Dorsolateral prefrontal cortex (tissue), 120 donors: ENCODE measurements at regions of chr15 and their contacts with region 1.

Region 1: GRCh38 chr15:85504749-85505676 is 124.6 kb downstream of the AKAP13 start:
- DNase-seq: peak in 3 of 10 donors; percentile 8 to 60 (median 10)
- H3K4me3 ChIP-seq: no peak overlapping the region
- H3K27ac ChIP-seq: no peak overlapping the region
- H3K27me3 ChIP-seq: peaks cover 0 to 3% (median 0%) of the 10 kb centered on the region in 45 donors
- CTCF ChIP-seq: peak; percentile 35 to 85 (median 64)

Region 2: GRCh38 chr15:85010386-85011159 is 494.4 kb before region 1 on chr15:
- intact Hi-C with region 1: no loop called
- DNase-seq: no peak
- H3K4me3 ChIP-seq: no peak overlapping the region
- H3K27ac ChIP-seq: peak overlapping the region in 55 of 59 donors; percentile 1 to 85 (median 62)
- H3K27me3 ChIP-seq: no peaks in the 10 kb centered on the region
- CTCF ChIP-seq: peak in 22 of 56 donors; percentile 34 to 67 (median 48)

Region 3: GRCh38 chr15:85289677-85290365 is 215.2 kb before region 1 on chr15:
- intact Hi-C with region 1: loop called in 1 of 2 experiments (anchors 5 kb)
- DNase-seq: peak in 5 of 10 donors; percentile 16 to 71 (median 49)
- H3K4me3 ChIP-seq: no peak overlapping the region
- H3K27ac ChIP-seq: no peak overlapping the region
- H3K27me3 ChIP-seq: peaks cover 0 to 6% (median 0%) of the 10 kb centered on the region in 45 donors
- CTCF ChIP-seq: peak in 55 of 56 donors; percentile 26 to 80 (median 59)

Region 4: DNA sequence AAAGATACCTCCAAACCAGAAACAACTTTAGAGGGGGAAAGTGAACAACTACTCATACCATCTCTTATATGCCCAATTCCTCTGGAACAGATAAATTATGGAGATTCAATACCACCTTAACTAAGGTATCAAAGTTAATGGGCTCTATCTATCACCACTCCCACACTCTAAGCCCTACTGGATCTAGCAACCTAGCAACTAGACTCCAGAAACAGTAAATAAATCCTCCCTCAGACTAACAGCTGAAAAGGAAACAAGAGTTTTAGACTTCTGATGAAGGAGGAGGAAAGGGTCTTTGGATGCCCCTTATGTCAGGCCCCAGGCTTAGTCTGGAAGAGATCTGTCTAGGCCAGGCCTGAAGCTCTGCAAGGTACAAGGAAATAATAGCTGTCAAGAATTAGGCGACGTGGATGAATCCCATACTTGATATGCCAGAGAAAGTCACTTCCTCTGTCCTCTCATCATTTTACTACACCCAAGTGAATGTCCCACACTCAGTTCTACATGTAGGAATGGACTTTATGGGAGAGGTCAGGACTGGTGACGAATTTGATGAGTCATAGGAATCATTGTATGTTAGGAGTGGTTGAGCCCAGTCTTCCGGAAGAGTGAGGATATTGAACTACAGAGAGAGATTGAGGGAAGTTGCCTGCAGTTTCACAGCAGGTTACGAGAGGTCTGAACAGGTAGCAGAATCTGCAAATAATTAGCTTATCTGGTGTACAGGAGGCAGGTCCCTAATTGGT is 10.8 kb before region 1 on chr15:
- intact Hi-C with region 1: no loop called
- DNase-seq: no peak
- H3K4me3 ChIP-seq: no peak overlapping the region
- H3K27ac ChIP-seq: no peak overlapping the region
- H3K27me3 ChIP-seq: no peaks in the 10 kb centered on the region
- CTCF ChIP-seq: no peak